Activated T-helper 1 cell treated with anti-CD3 and anti-CD28 coated beads, Interleukin-12 subunit alpha, Interleukin-12 subunit beta, Interleukin-2, Interleukin-4 antibody, amounts not matched to agents 30 ng/mL and 10 ng/mL and 1 ng/mL, durations not matched to agents 14 hours and 24 hours and 36 hours (primary cell): ENCODE measurements at regions of chr15 and their contacts with region 1.

Region 1: DNA sequence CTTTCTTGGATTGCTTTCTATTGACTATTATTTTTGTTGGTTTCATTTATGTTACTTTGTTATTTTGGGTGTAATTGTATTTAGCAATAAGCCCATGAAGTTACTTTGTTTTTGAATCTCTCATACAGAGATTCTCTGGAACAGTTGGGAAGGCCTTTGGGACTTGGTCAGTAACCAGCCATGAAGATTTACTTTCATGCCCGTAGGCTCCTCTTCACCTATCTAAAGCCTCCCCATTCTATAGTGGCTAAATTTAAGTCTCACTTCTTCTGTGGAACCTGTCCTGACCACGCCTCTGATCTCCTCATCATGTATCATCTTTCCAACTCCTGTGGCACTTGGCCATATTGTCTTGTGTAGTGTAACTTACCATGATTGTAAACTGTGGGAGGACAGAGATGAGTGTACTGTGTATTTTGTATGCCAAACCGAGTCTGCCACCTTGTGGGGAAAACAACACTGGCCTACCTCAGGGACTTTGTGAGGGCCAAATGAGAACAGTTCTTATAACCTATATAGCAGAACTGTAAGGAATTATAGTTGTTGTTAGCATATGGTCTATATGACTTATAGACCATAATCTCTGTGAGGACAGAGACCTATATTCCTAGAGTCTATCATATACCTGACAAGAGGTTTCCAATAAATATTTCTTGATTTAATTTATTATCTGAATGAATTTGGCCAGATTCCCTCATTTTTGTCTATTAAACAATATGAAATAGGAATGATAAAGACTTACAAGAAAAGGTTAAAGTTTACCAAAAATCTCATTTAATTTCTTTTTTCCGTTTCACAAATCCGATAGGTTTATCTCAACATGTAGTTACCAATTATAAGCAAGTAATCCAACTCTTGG is 75.0 kb downstream of the STARD9 start:
- DNase-seq: peak; percentile 61
- H3K4me3 Mint-ChIP-seq: no peak overlapping the region
- H3K27ac Mint-ChIP-seq: no peak overlapping the region
- H3K4me1 Mint-ChIP-seq: peaks cover 20% of the 10 kb centered on the region
- H3K27me3 Mint-ChIP-seq: peaks cover under 1% of the 10 kb centered on the region

Region 2: GRCh38 chr15:42474827-42475226 is 175.6 kb before region 1 on chr15:
- intact Hi-C with region 1: loop called (anchors 1 kb)
- DNase-seq: no peak
- H3K4me3 Mint-ChIP-seq: no peak overlapping the region
- H3K27ac Mint-ChIP-seq: no peak overlapping the region
- H3K4me1 Mint-ChIP-seq: peaks cover 5% of the 10 kb centered on the region
- H3K27me3 Mint-ChIP-seq: no peaks in the 10 kb centered on the region

Region 3: GRCh38 chr15:42495361-42496212 is 154.8 kb before region 1 on chr15 and contains the start of gene SNAP23:
- intact Hi-C with region 1: loop called (anchors 1 kb)
- DNase-seq: peak; percentile 84
- H3K4me3 Mint-ChIP-seq: peak within 1 kb of the TSS; percentile 100
- H3K27ac Mint-ChIP-seq: peak within 1 kb of the TSS; percentile 89
- H3K4me1 Mint-ChIP-seq: peaks cover 60% of the 10 kb centered on the region
- H3K27me3 Mint-ChIP-seq: no peaks in the 10 kb centered on the region
- total RNA-seq, gene SNAP23: 73.8 and 87.5 TPM in 2 replicates

Region 4: GRCh38 chr15:42575188-42576039 is 75.0 kb before region 1 on chr15 and contains the start of gene STARD9:
- intact Hi-C with region 1: loop called (anchors 1 kb)
- DNase-seq: peak; percentile 93
- H3K4me3 Mint-ChIP-seq: peak within 1 kb of the TSS; percentile 92
- H3K27ac Mint-ChIP-seq: peak within 1 kb of the TSS; percentile 72
- H3K4me1 Mint-ChIP-seq: peaks cover 35% of the 10 kb centered on the region
- H3K27me3 Mint-ChIP-seq: peaks cover 24% of the 10 kb centered on the region
- total RNA-seq, gene STARD9: 6.1 and 9.2 TPM in 2 replicates

Region 5: DNA sequence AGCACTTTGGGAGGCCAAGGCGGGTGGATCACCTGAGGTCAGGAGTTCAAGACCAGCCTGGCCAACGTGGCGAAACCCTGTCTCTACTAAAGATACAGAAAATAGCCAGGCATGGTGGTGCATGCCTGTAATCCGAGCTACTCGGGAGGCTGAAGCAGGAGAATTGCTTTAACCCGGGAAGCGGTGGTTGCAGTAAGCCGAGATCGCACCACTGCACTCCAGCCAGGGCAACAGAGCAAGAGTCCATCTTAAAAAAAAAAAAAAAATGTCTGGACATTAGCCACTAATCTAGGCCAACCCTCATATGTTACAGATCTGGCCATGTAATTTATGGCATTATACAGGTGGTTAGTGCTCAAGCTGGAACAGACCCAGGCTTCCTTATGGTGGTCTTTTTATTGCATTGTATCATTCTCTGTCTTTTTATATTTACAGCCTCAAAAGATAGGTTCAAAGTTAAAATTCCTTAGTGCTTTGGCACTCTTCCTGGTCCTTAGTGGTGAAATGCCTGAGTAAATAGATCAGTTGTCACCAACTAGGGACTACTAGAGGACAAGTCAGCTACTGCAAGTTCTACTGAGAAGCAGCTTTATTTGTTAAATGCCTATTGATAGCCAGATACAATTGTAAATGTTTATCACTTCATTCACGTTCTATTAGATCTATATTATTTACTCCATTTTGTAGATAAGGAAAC is 59.1 kb before region 1 on chr15:
- intact Hi-C with region 1: no loop called
- DNase-seq: no peak
- H3K4me3 Mint-ChIP-seq: no peak overlapping the region
- H3K27ac Mint-ChIP-seq: no peak overlapping the region
- H3K4me1 Mint-ChIP-seq: no peaks in the 10 kb centered on the region
- H3K27me3 Mint-ChIP-seq: no peaks in the 10 kb centered on the region

Region 6: DNA sequence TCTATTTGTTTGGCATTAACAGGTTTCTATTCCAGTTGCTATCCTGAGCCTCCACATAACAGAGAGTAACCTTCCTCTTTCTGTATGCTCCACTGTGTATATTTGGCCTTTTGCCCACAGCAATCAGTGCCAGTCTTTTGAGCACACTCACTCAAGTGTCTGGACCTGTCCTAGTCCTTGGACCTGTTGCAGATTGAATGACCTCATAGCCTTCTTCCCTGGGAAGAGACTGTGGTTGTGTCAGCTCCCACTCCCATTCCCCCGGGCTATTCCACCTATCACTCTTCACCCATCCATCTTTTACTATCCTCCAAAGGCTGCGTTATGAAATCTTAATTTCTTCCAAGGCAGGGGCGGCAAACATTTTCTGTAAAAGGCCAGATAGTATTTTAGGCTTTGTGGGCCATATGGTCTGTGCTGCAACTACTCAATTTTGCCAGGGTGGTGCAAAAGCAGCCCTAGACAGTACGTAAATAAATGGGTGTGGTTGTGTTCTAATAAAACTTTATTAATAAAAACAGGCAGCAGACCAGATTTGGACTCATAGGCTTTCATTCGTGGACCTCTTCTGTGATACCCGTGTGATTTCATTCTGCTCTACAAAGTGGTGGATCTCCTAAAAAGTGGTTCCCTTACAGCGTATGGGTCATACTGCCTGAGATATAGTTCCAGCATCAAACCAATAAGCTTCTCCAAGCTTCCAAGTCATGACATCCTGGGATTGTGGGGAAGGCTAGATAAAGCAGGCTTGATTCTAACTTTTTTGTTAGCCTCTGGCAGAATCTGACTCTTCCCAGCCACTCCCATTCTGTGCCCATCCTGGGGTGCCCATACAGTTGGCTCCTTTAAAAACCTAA is 29.1 kb after region 1 on chr15:
- intact Hi-C with region 1: loop called (anchors 1 kb)
- DNase-seq: no peak
- H3K4me3 Mint-ChIP-seq: no peak overlapping the region
- H3K27ac Mint-ChIP-seq: no peak overlapping the region
- H3K4me1 Mint-ChIP-seq: peaks cover 26% of the 10 kb centered on the region
- H3K27me3 Mint-ChIP-seq: no peaks in the 10 kb centered on the region

Region 7: DNA sequence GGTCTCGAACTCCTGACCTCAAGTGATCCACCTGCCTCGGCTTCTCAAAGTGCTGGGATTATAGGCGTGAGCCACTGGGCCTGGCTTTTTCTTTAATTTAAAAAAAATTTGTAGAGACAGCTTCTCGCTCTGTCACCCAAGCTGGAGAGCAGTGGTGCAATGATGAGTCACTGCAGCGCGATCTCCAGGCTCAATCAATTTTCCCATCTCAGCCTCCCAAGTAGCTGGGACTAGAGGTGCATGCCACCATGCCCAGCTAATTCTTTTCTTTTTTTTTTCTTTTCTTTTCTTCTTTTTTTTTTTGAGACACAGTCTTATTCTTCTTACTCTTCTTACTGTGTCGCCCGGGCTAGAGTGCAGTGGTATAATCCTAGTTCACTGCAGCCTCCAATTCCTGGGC is 740.3 kb after region 1 on chr15:
- intact Hi-C with region 1: no loop called
- DNase-seq: no peak
- H3K4me3 Mint-ChIP-seq: no peak overlapping the region
- H3K27ac Mint-ChIP-seq: no peak overlapping the region
- H3K4me1 Mint-ChIP-seq: no peaks in the 10 kb centered on the region
- H3K27me3 Mint-ChIP-seq: no peaks in the 10 kb centered on the region